ENCODE measurements at regions of chr1 and their contacts with region 1.

Region 1: DNA sequence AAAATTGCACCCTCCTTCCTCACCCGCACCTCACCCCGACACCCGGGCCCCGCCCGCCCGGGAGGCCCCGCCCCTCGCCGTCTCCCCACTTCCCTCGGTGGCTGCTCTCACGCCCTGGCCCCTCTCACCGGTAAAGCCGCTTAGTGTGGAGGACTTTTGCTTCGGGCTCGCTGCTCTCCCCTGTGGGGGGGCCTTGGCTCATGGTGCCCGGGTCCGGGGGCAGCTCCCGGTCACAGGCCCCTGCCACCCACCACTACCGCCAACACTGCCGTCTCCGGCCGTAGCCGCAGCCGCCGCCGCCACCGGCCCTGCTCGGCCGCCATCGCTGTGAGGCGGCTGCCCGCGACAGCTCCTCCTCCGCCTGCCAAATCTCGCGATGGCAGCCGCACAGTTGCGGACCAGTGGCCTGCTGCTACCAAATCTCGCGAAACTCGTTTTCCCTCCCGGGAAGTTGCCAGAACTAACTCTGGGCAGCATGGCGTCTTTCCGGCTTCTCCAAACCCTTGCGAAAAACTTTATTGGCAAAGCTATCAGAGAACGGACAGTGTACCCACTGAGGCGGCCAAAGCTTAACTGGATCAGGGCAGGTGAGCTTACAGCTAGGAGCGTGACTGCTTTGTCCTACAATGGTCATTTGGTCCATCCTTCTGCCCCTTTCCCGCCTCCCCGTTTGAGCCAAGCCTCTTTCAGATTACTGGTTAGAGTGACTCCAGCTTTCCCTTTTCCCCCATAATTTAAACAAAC is at the start of gene SMG5:
- DNase-seq: peak; percentile 99
- H3K4me3 ChIP-seq: peak within 1 kb of the TSS; percentile 48 to 98 (median 90)
- H3K27ac ChIP-seq: peak within 1 kb of the TSS; percentile 85 to 95
- H3K4me1 ChIP-seq: peaks cover 11 to 25% (median 21%) of the 10 kb centered on the region in 4 experiments
- H3K27me3 ChIP-seq: no peaks in the 10 kb centered on the region

Region 2: GRCh38 chr1:156053770-156054499 is 228.7 kb before region 1 on chr1 and contains the start of gene UBQLN4:
- CTCF ChIA-PET with region 1: no interaction called
- POLR2A ChIA-PET with region 1: no interaction called
- DNase-seq: peak; percentile 86 to 93 (median 92)
- H3K4me3 ChIP-seq: peak within 1 kb of the TSS; percentile 84 to 99 (median 95)
- H3K27ac ChIP-seq: peak within 1 kb of the TSS; percentile 68 to 92
- H3K4me1 ChIP-seq: peaks cover 8 to 31% (median 22%) of the 10 kb centered on the region in 4 experiments
- H3K27me3 ChIP-seq: no peaks in the 10 kb centered on the region

Region 3: GRCh38 chr1:156259805-156260204 is 22.8 kb before region 1 on chr1:
- CTCF ChIA-PET with region 1: interaction called, 13 read pairs
- POLR2A ChIA-PET with region 1: no interaction called
- DNase-seq: peak; percentile 38 to 55 (median 50)
- H3K4me3 ChIP-seq: no peak overlapping the region
- H3K27ac ChIP-seq: no peak overlapping the region
- H3K4me1 ChIP-seq: peaks cover 10 to 48% (median 37%) of the 10 kb centered on the region in 4 experiments
- H3K27me3 ChIP-seq: no peaks in the 10 kb centered on the region